Activated CD8-positive, alpha-beta T cell treated with anti-CD3 and anti-CD28 coated beads, Interleukin-2, amount 10 ng/mL, durations not matched to agents 7 days and 5 days (primary cell): ENCODE measurements at regions of chr22 and their contacts with region 1.

Region 1: GRCh38 chr22:22520020-22520656 is at the start of gene ZNF280A:
- DNase-seq: no peak
- ATAC-seq: no peak
- H3K4me3 Mint-ChIP-seq: no peak within 1 kb of the TSS
- H3K27ac Mint-ChIP-seq: no peak within 1 kb of the TSS
- H3K4me1 Mint-ChIP-seq: no peaks in the 10 kb centered on the region
- H3K27me3 Mint-ChIP-seq: peaks cover 23% of the 10 kb centered on the region
- total RNA-seq, gene ZNF280A: not detected

Region 2: DNA sequence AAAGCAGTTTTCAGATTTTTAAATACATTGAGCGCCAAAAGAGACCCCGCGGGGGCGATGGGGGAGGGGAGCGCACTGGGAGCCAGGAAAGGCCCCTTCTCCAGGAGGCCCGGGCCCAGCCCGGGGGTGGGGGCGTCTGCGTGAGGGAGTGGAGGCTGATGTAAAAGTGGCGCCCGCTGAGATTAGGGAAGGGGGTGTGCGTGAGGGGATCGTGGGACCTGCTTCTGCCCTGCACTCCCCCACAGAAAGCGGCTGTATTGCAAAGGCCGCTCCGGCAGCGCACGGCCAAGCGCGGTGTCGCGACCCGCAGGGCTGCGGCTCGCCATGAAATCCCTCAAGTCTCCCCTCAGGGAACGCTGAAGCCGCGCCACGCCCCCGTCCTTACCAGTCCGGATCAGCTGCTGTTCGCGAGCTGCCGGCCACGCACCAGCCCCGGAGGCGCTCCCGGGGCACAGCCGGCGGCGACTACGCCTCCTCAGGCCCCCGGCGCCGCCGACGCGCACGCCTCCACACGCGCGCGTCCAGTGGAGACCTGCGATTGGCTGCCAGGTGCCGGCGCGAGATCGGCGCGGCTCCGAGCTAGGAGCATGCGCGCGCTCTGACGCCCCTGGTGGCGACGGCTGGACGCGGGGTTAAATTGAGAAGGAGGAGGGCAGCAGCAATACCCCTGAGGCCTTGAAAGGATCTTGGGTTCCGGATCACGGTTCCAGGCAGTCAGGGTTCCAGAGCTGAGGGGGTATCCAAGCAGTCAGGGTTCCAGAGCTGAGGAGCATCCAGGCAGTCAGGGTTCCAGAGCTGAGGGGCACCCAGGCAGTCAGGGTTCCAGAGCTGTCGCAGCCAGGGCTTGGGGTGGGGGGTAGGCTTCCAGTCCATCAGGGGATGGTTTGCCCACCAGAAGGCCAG is 11.6 kb before region 1 on chr22 and contains the start of gene ZNF280B:
- CTCF ChIA-PET with region 1: interaction called, 13 read pairs
- POLR2A ChIA-PET with region 1: no interaction called
- DNase-seq: peak; percentile 89
- ATAC-seq: peak; percentile 100
- H3K4me3 Mint-ChIP-seq: peak within 1 kb of the TSS; percentile 81
- H3K27ac Mint-ChIP-seq: peak within 1 kb of the TSS; percentile 47
- H3K4me1 Mint-ChIP-seq: peaks cover 14% of the 10 kb centered on the region
- H3K27me3 Mint-ChIP-seq: peaks cover 15% of the 10 kb centered on the region
- total RNA-seq, gene ZNF280B: 2.6 TPM